ENCODE measurements at regions of chr7 and their contacts with region 1.

Region 1: DNA sequence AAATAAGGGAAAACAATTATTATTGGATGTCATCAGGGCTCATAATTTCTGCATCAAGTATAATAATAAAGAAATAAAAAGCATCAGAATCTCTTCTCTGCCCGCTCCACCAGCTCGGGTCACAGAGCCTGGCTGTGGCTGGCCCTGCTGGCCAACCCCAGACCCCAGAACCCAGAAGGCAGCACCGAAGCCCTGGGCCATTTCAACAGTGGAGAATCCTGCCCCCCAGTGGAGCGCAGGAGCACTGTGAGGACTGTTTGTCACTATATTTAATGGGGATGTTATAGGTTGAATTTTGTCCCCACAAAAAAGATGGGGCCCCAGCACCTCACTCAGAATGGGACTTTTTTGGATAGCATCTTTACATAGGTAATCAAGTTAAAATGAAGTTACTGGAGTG is 27.3 kb downstream of the DENND11 start:
- DNase-seq: peak; percentile 39 to 71
- H3K4me3 ChIP-seq: no peak overlapping the region
- H3K27ac ChIP-seq: no peak overlapping the region
- H3K4me1 ChIP-seq: no peaks in the 10 kb centered on the region; a peak in 1 of 7 replicates
- H3K27me3 ChIP-seq: no peaks in the 10 kb centered on the region
- CTCF ChIP-seq: peak; percentile 74 to 82 (median 76)
- EP300 ChIP-seq: no peak
- POLR2A ChIP-seq: no peak
- RAD21 ChIP-seq: peak; percentile 75 to 77

Region 2: GRCh38 chr7:141663081-141663849 is 11.4 kb before region 1 on chr7:
- CTCF ChIA-PET with region 1: interaction called, 47 read pairs
- POLR2A ChIA-PET with region 1: interaction called, 5 read pairs
- DNase-seq: no peak
- H3K4me3 ChIP-seq: no peak overlapping the region
- H3K27ac ChIP-seq: no peak overlapping the region
- H3K4me1 ChIP-seq: no peaks in the 10 kb centered on the region
- H3K27me3 ChIP-seq: no peaks in the 10 kb centered on the region
- CTCF ChIP-seq: no peak
- EP300 ChIP-seq: no peak
- POLR2A ChIP-seq: no peak
- RAD21 ChIP-seq: no peak

Region 3: GRCh38 chr7:141685285-141686023 is 10.8 kb after region 1 on chr7:
- CTCF ChIA-PET with region 1: interaction called, 62 read pairs
- POLR2A ChIA-PET with region 1: interaction called, 3 read pairs
- DNase-seq: no peak
- H3K4me3 ChIP-seq: no peak overlapping the region
- H3K27ac ChIP-seq: no peak overlapping the region
- H3K4me1 ChIP-seq: peaks cover 0 to 5% (median 2%) of the 10 kb centered on the region in 4 experiments; a peak in 2 of 7 replicates
- H3K27me3 ChIP-seq: no peaks in the 10 kb centered on the region
- CTCF ChIP-seq: no peak
- EP300 ChIP-seq: no peak
- POLR2A ChIP-seq: no peak
- RAD21 ChIP-seq: no peak

Region 4: GRCh38 chr7:141695803-141696289 is 21.1 kb after region 1 on chr7:
- CTCF ChIA-PET with region 1: interaction called, 62 read pairs
- POLR2A ChIA-PET with region 1: interaction called, 5 read pairs
- DNase-seq: no peak
- H3K4me3 ChIP-seq: no peak overlapping the region
- H3K27ac ChIP-seq: 0 out of 2 replicates have a peak overlapping the region, but pooled peaks have one; percentile 20
- H3K4me1 ChIP-seq: peaks cover 0 to 20% (median 14%) of the 10 kb centered on the region in 4 experiments; a peak in 6 of 7 replicates
- H3K27me3 ChIP-seq: no peaks in the 10 kb centered on the region
- CTCF ChIP-seq: no peak
- EP300 ChIP-seq: no peak
- POLR2A ChIP-seq: no peak
- RAD21 ChIP-seq: no peak